ENCODE measurements at regions of chr17 and their contacts with region 1.

Region 1: GRCh38 chr17:63425482-63425881 is 20.6 kb downstream of the CYB561 start:
- DNase-seq: peak; percentile 89
- H3K4me3 ChIP-seq: no peak overlapping the region
- H3K27ac ChIP-seq: no peak overlapping the region
- H3K4me1 ChIP-seq: no peaks in the 10 kb centered on the region
- H3K27me3 ChIP-seq: no peaks in the 10 kb centered on the region
- CTCF ChIP-seq: peak; percentile 94

Region 2: DNA sequence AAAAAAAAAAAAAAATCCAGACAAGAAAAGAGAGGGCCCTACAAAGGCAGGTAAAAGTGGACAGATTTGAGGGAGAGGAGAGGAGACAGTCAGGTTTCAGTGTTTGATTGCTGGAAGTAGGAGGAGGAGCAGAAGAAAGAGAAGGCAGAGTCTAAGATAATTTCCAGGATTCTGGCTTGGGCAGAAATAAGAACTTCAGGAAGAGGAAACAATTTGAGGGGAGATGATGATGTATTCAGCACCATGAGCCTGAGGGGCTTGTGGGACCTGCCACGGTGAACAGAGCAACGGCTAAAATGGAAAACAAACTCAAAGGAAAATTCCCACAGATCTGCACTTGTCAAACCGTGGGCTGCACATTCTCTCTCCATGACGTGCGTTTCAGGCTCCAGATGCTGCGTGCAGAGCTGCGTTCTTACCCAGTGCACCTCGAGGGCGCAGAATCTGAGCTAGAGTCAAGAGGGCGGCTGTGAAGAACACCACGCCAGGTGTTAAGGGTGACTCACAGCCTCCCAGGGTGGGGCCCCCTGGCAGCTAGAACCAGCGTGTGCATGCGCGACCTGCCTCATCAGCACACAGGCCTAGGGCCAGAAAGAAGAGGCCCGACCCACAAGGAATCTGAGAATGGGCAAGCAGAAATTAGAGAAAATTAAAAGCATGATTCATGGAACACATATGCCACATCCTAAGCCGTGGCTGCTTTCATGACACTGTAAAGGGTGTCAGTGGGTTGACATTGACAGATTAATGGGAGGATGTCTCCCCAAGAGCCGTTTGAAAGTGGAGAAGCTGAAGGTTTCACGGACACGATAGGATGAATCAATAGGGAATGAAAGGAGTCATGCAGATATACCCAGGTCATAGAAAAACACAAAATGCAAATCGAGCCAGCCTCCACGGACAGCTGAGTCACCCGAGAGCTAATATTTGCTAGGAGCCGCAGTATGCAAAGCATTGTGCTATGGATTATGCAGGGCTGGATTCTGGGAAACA is 646.5 kb before region 1 on chr17:
- CTCF ChIA-PET with region 1: no interaction called
- POLR2A ChIA-PET with region 1: no interaction called
- intact Hi-C with region 1: no loop called
- DNase-seq: no peak
- H3K4me3 ChIP-seq: no peak overlapping the region
- H3K27ac ChIP-seq: no peak overlapping the region
- H3K4me1 ChIP-seq: no peaks in the 10 kb centered on the region
- H3K27me3 ChIP-seq: no peaks in the 10 kb centered on the region
- CTCF ChIP-seq: no peak

Region 3: GRCh38 chr17:63478791-63479494 is 53.5 kb after region 1 on chr17:
- CTCF ChIA-PET with region 1: interaction called, 38 read pairs
- POLR2A ChIA-PET with region 1: no interaction called
- intact Hi-C with region 1: loop called (anchors 1 kb)
- DNase-seq: peak; percentile 84
- H3K4me3 ChIP-seq: no peak overlapping the region
- H3K27ac ChIP-seq: no peak overlapping the region
- H3K4me1 ChIP-seq: peaks cover 31% of the 10 kb centered on the region
- H3K27me3 ChIP-seq: no peaks in the 10 kb centered on the region
- CTCF ChIP-seq: peak; percentile 90

Region 4: GRCh38 chr17:63571763-63572271 is 146.3 kb after region 1 on chr17:
- CTCF ChIA-PET with region 1: interaction called, 10 read pairs
- POLR2A ChIA-PET with region 1: no interaction called
- intact Hi-C with region 1: no loop called
- DNase-seq: peak; percentile 41
- H3K4me3 ChIP-seq: no peak overlapping the region
- H3K27ac ChIP-seq: no peak overlapping the region
- H3K4me1 ChIP-seq: peaks cover 3% of the 10 kb centered on the region
- H3K27me3 ChIP-seq: no peaks in the 10 kb centered on the region
- CTCF ChIP-seq: no peak

Region 5: DNA sequence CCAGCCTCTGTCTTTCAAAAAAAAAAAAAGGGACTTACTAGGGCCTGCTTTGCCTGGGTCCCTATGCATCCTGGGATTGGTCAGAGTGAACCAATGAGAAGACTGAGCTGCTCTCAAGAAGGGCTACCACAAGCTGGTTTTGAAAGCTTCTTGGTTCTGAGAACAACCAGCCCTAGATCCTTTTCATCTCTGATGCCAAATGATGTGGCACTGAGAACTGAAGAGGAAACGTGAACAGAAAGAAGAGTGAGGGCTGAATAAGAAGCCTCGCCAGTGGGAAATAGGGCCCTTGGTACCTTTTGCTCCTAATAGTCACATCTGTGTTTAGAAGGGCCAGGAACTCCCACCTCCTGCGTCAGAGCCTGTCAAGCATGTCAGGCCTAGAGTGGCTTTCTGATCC is 185.9 kb after region 1 on chr17:
- CTCF ChIA-PET with region 1: interaction called, 30 read pairs
- POLR2A ChIA-PET with region 1: no interaction called
- intact Hi-C with region 1: loop called (anchors 1 kb)
- DNase-seq: no peak
- H3K4me3 ChIP-seq: no peak overlapping the region
- H3K27ac ChIP-seq: no peak overlapping the region
- H3K4me1 ChIP-seq: no peaks in the 10 kb centered on the region
- H3K27me3 ChIP-seq: no peaks in the 10 kb centered on the region
- CTCF ChIP-seq: no peak

Region 6: DNA sequence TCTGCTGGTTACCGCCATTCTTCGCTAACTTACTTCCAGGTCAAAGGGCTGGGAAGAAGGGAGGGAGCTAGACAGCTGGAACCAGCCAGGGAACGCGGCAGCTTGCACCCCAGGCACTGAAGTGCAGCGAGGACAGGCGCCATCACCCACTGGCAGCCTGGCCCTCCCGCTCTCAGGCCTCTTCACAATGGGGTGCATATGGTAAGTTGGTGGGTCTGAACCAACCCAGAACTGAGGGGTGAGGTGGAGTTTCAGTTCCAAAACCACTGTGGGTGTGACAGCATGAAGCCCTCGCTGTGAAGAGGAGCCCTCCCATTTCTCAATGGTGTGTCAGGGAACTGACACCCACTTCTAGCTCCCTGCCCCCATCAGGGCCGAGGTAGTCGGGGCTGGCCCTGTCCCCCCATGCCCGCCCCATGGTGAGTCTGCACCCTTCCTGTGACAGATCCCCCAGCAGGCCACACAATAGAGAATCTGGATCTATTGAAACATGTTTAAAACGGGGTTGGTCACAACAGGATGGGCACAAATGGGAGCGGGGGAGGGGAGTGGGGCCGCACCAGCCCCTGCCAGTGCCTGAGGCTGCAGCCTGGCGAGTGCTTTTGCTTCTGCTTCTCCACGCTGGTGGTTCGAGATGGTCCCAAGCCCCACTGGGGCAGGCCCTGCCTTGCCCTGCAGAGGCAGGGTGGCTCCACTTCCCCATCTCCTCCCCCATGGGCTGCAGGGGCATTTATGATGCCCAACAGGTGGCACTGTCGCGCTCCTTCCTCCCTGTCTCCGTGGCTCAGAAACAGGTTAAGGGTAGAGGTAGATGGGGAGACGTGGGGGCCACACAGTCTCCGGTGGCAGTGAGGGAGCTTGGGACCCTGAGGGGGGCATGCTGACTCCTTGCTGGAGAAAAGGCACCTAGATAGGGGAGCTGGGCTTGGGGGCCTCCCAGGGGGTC is 272.1 kb after region 1 on chr17:
- CTCF ChIA-PET with region 1: interaction called, 6 read pairs
- POLR2A ChIA-PET with region 1: no interaction called
- intact Hi-C with region 1: loop called (anchors 10 kb)
- DNase-seq: peak; percentile 63
- H3K4me3 ChIP-seq: peak overlapping the region; percentile 76
- H3K27ac ChIP-seq: peak overlapping the region; percentile 84
- H3K4me1 ChIP-seq: peaks cover 41% of the 10 kb centered on the region
- H3K27me3 ChIP-seq: no peaks in the 10 kb centered on the region
- CTCF ChIP-seq: peak; percentile 68